ENCODE measurements at regions of chr3 and their contacts with region 1.

Region 1: DNA sequence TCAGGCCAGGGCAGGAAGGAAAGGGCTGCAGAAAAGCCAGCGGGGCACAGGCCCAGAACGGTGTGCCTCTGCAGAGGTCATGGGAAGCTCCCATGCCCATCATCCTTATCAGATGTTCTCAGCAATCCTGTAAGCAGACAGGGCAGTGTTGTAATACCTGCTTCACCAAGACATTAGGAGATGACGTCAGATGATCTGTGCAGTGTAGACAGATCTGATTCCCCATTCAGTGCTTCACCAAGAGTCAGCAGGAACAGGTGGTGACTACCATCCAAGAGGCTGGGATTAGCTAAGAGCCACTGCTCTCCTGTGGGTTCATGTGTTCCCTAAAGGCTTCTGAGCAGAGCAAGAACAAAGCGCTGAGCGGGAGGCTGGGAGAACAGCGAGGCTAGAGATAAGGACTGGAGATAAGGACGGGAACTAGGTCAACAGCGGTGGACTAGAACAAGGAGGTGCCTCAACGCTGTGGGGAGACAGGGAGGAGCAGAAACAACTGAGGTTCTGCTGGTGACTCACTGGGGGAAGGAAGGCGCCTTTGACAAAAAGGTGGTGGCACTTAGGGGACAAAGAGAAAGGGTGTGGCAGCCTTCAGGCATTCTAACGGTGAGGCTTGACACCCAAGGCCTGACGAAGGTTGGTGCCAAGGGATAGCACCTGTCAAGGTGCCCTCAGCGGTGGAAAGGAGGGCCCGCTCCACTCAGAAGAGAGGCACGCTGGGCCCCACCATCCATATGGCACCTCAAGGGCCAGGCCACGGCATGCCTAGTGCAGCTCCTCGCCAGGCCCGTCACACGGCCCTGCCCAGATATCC is 28.4 kb downstream of the CCDC12 start:
- DNase-seq: peak; percentile 84 to 95 (median 94)
- H3K4me3 ChIP-seq: peak overlapping the region in 1 of 3 experiments; percentile 61
- H3K4me3 Mint-ChIP-seq: peak overlapping the region; percentile 37 to 87
- H3K27ac ChIP-seq: peak overlapping the region; percentile 75 to 87
- H3K27ac Mint-ChIP-seq: peak overlapping the region; percentile 94 to 99 (median 97)
- H3K4me1 ChIP-seq: peaks cover 66 to 68% of the 10 kb centered on the region in 2 donors
- H3K4me1 Mint-ChIP-seq: peaks cover 82% of the 10 kb centered on the region
- H3K27me3 ChIP-seq: no peaks in the 10 kb centered on the region
- H3K27me3 Mint-ChIP-seq: no peaks in the 10 kb centered on the region
- CTCF ChIP-seq: no peak

Region 2: DNA sequence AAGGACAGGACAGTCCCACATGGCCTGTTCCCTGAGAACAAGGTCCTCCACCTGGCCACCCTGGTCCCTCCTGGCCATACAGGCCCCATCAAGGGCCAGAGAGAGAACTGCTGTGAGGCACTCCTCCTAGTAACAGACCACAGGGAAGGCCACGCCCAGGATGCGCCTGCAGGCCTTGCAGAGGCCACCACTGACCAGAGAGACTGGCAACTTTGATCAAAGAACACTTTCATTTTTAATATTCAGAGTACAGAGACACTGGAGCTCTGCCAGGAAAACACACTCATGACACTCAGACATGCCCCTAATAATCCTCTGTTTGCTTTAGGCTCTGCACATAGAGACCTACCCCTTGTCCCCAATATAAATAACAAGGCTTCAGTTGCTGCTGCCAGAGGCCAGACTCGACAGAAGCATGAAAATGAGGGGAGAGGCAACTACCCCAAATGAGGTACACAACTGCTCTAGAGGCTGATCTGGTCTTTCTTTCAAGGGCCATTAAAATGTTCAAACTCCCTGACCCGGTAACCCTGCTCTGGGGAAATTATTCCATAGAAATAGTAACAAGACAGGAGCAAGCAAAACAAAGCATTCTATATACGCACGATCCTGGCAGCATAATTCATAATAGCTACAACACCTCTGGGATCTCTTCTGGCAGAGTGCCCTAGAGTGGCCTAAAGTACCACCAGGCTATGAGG is 16.4 kb before region 1 on chr3:
- intact Hi-C with region 1: loop called in 1 of 2 experiments (anchors 1 kb)
- DNase-seq: peak in 2 of 3 donors; percentile 51 to 77
- H3K4me3 ChIP-seq: peak overlapping the region in 1 of 3 experiments; percentile 57
- H3K4me3 Mint-ChIP-seq: peak overlapping the region; percentile 68 to 77
- H3K27ac ChIP-seq: peak overlapping the region; percentile 91 to 94
- H3K27ac Mint-ChIP-seq: peak overlapping the region; percentile 91 to 98 (median 94)
- H3K4me1 ChIP-seq: peaks cover 100% of the 10 kb centered on the region in 2 donors
- H3K4me1 Mint-ChIP-seq: peaks cover 96% of the 10 kb centered on the region
- H3K27me3 ChIP-seq: no peaks in the 10 kb centered on the region
- H3K27me3 Mint-ChIP-seq: no peaks in the 10 kb centered on the region
- CTCF ChIP-seq: no peak